Pancreas (tissue), 10 donors: ENCODE measurements at regions of chr1 and their contacts with region 1.

Region 1: DNA sequence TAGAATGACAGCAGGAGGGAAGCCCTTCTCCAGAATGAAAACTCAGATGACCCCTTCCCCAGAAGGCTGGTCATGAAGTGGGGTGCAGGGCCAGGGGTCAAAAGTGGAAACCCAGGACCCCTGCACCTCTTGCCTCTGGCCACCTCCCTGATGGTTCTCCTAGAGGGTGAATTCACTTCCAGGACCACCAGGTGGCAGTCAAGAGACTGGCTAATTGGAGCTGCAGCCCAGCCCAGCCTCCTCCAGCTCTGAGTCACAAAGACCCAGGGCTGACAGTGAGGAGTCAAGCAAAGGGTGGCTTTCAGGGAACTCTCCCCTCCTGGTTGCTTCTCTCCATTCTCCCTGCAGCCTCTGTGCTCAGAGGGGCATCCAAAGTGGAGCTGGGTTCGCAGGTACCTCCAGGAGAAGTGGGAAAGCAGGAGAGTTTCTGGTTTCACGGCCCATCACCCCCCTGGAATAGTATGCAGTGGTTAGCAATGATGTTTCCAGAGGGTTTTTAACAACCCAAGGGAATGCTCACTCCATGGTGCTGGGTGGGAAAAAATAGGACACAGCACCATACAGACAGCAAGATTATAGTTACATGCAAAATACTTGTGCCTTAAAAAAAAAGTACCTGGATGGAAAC is 6.1 kb upstream of the EPHB2 start:
- DNase-seq: peak; percentile 77 to 90 (median 84)
- ATAC-seq: peak; percentile 92 to 99 (median 96)
- H3K4me3 ChIP-seq: no peak overlapping the region
- H3K27ac ChIP-seq: no peak overlapping the region
- H3K4me1 ChIP-seq: no peaks in the 10 kb centered on the region
- H3K27me3 ChIP-seq: no peaks in the 10 kb centered on the region
- CTCF ChIP-seq: peak; percentile 75 to 90 (median 86)

Region 2: DNA sequence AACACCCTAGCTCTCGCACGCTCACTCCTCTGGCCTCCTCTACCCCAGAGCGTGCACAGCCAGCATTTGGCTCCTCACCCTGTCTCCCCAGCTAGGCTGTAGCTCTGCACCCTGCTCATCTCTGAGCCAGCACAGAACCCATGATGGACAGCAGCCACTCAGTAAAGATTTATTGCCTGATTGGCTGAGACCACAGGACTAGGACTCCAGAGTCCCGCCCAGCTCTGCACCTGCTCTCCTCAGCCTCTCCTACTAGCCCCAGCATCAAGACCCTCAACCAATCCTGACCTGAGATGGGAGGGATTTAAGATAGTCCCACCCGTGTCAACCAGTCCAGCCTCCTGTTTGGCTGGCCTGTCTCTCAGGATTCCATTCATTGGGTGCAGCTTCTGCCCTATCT is 42.2 kb before region 1 on chr1:
- intact Hi-C with region 1: no loop called
- DNase-seq: no peak
- ATAC-seq: peak in 2 of 4 donors; percentile 54 to 90
- H3K4me3 ChIP-seq: no peak overlapping the region
- H3K27ac ChIP-seq: no peak overlapping the region
- H3K4me1 ChIP-seq: no peaks in the 10 kb centered on the region
- H3K27me3 ChIP-seq: no peaks in the 10 kb centered on the region
- CTCF ChIP-seq: no peak

Region 3: DNA sequence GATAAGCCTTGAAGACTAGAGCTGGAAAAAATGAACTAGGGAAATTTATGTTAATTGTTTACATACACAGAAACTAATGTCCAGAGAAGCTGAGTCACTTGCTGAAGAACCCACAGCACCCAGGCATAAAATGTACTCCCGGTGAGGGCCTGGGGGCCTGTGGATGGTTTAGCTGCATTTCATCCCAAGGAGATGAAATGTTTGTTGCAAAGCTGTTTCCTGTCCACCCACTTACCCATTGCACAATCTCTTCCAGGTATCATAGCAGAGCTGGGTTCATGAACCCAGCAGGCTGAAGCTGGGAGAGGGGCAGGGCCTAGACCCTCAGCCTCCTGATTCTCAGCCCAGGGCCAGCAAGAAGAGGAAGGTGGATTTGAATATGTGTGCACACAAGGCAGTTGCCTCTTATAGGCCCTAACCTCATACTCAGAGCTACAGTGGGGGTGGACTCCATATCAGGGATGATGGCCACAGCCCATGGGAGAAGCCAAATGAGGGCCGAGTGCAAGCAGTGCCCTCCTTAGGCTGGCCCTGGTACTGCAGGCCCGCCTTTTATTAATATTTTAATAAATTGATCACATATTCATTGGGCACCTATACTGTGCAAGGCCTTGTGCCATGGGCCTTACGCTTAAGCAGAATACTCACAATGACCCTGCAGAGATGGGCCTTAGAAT is 157.3 kb after region 1 on chr1:
- intact Hi-C with region 1: loop called in 1 of 3 experiments (anchors 10 kb)
- DNase-seq: peak in 3 of 6 donors; percentile 33 to 70 (median 39)
- ATAC-seq: peak; percentile 53 to 94 (median 80)
- H3K4me3 ChIP-seq: no peak overlapping the region
- H3K27ac ChIP-seq: no peak overlapping the region
- H3K4me1 ChIP-seq: no peaks in the 10 kb centered on the region
- H3K27me3 ChIP-seq: no peaks in the 10 kb centered on the region
- CTCF ChIP-seq: peak; percentile 28 to 69 (median 58)

Region 4: GRCh38 chr1:22889213-22889827 is 184.8 kb after region 1 on chr1:
- intact Hi-C with region 1: loop called in 1 of 3 experiments (anchors 10 kb)
- DNase-seq: peak in 1 of 6 donors; percentile 21
- ATAC-seq: peak in 3 of 4 donors; percentile 72 to 76 (median 72)
- H3K4me3 ChIP-seq: no peak overlapping the region
- H3K27ac ChIP-seq: no peak overlapping the region
- H3K4me1 ChIP-seq: no peaks in the 10 kb centered on the region
- H3K27me3 ChIP-seq: no peaks in the 10 kb centered on the region
- CTCF ChIP-seq: peak; percentile 41 to 71 (median 64)

Region 5: GRCh38 chr1:22969304-22969709 is 264.8 kb after region 1 on chr1:
- intact Hi-C with region 1: loop called in 1 of 3 experiments (anchors 10 kb)
- DNase-seq: peak in 3 of 6 donors; percentile 46 to 49 (median 48)
- ATAC-seq: peak; percentile 79 to 88 (median 87)
- H3K4me3 ChIP-seq: no peak overlapping the region
- H3K27ac ChIP-seq: no peak overlapping the region
- H3K4me1 ChIP-seq: no peaks in the 10 kb centered on the region
- H3K27me3 ChIP-seq: no peaks in the 10 kb centered on the region
- CTCF ChIP-seq: no peak